H1 (cell line): ENCODE measurements at regions of chr12 and their contacts with region 1.

Region 1: GRCh38 chr12:122064025-122064777 is 14.4 kb upstream of the MLXIP start:
- DNase-seq: peak; percentile 87 to 88
- H3K4me3 ChIP-seq: peak overlapping the region; percentile 2 to 44 (median 10); a peak in 4 of 8 replicates
- H3K27ac ChIP-seq: 0 out of 2 replicates have a peak overlapping the region, but pooled peaks have one; percentile 24
- H3K4me1 ChIP-seq: peaks cover 0 to 21% (median 10%) of the 10 kb centered on the region in 4 experiments; a peak in 6 of 7 replicates
- H3K27me3 ChIP-seq: no peaks in the 10 kb centered on the region
- CTCF ChIP-seq: peak; percentile 45 to 78 (median 47)
- EP300 ChIP-seq: no peak
- POLR2A ChIP-seq: peak in 1 of 2 experiments; percentile 27; a peak in 1 of 3 replicates
- RAD21 ChIP-seq: peak; percentile 25 to 40

Region 2: DNA sequence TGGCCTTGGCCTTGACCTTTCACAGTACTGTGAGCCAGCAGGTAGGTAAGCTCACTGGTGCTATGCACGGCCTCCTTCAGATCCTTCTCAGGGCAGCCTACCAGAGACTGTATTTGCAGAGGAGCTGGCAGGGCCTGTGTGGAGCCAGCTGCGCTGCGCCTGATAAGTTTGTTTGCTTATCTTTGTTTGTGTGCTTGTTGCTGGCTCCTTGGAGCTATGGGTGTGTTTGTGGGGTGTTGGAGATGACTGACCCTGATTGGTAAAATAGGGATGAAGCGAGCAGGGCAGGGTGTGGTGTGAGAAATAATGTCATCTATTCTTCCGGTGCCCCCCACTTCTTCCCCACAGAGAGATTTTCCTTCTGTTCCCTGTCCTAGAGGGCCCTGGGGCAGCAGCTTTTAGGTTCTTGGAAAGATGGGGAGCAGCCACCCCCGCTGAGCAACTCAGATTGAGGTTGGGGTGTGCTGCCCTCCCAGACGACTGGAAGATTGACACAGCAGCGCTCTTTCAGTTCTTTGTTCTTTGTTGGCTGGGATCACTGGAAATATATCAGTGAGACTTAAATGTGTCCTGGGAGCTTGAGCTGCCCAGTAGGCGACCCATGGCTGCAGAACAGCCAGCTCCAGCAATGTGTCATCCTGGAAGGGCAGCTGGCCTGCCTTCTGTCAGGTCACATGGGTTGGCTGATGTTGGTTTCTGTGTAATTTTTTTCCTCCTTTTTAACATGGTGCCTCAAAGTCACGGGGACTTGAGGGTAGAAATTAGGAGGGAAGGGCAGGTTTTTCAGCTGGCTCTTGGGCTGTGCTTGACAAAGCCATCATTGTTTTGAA is 33.9 kb after region 1 on chr12:
- CTCF ChIA-PET with region 1: interaction called, 13 read pairs
- POLR2A ChIA-PET with region 1: interaction called, 3 read pairs
- DNase-seq: no peak
- H3K4me3 ChIP-seq: no peak overlapping the region
- H3K27ac ChIP-seq: no peak overlapping the region
- H3K4me1 ChIP-seq: peaks cover 0 to 6% (median 0%) of the 10 kb centered on the region in 4 experiments; a peak in 3 of 7 replicates
- H3K27me3 ChIP-seq: no peaks in the 10 kb centered on the region; a peak in 1 of 7 replicates
- CTCF ChIP-seq: no peak
- EP300 ChIP-seq: no peak
- POLR2A ChIP-seq: no peak
- RAD21 ChIP-seq: no peak